ENCODE measurements at regions of chr5 and their contacts with region 1.

Region 1: GRCh38 chr5:157142317-157143126 is at the start of gene MED7:
- DNase-seq: peak; percentile 66 to 98 (median 96)
- ATAC-seq: peak; percentile 98
- H3K4me3 ChIP-seq: peak within 1 kb of the TSS; percentile 82
- H3K4me3 Mint-ChIP-seq: peak within 1 kb of the TSS; percentile 92 to 99 (median 96)
- H3K27ac ChIP-seq: peak within 1 kb of the TSS; percentile 94
- H3K27ac Mint-ChIP-seq: peak within 1 kb of the TSS; percentile 97 to 100 (median 99)
- H3K4me1 ChIP-seq: peaks cover 11 to 22% of the 10 kb centered on the region in 2 donors
- H3K4me1 Mint-ChIP-seq: peaks cover 11 to 64% (median 48%) of the 10 kb centered on the region in 7 donors
- H3K27me3 ChIP-seq: no peaks in the 10 kb centered on the region
- H3K27me3 Mint-ChIP-seq: no peaks in the 10 kb centered on the region
- total RNA-seq, gene MED7: 5.8 to 18.5 (median 14.2) TPM

Region 2: DNA sequence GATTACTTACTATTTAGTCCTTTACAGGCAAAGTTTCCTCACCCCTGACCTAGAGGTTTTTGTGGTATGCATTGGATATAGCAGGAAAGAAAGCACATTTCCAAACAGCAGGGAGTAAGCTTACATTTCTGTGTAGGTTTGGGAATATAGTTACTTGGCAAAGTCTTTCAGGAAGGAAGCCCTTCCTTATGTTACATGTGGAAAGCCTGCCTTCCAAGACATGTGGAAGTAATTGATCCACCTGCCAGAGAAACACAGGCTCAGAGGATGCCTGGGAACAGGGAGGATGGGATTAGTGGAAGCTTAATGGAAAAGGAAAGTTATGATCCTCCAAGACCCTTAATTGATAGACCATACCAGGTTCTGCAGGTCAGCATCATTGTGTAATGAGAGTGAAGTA is 379.8 kb before region 1 on chr5:
- CTCF ChIA-PET with region 1: no interaction called
- POLR2A ChIA-PET with region 1: no interaction called
- intact Hi-C with region 1: no loop called
- DNase-seq: no peak
- ATAC-seq: no peak
- H3K4me3 ChIP-seq: no peak overlapping the region
- H3K4me3 Mint-ChIP-seq: no peak overlapping the region
- H3K27ac ChIP-seq: no peak overlapping the region
- H3K27ac Mint-ChIP-seq: no peak overlapping the region
- H3K4me1 ChIP-seq: no peaks in the 10 kb centered on the region
- H3K4me1 Mint-ChIP-seq: peaks cover 0 to 2% (median 0%) of the 10 kb centered on the region in 7 donors
- H3K27me3 ChIP-seq: peaks cover 0 to 4% of the 10 kb centered on the region in 2 donors
- H3K27me3 Mint-ChIP-seq: peaks cover under 1 to 11% (median 7%) of the 10 kb centered on the region in 5 donors

Region 3: GRCh38 chr5:156913719-156914370 is 228.7 kb before region 1 on chr5:
- CTCF ChIA-PET with region 1: no interaction called
- POLR2A ChIA-PET with region 1: interaction called, 13 read pairs
- intact Hi-C with region 1: no loop called
- DNase-seq: peak in 6 of 9 donors; percentile 32 to 60 (median 54)
- ATAC-seq: peak; percentile 85
- H3K4me3 ChIP-seq: peak overlapping the region; percentile 24
- H3K4me3 Mint-ChIP-seq: peak overlapping the region; percentile 71 to 93 (median 82)
- H3K27ac ChIP-seq: peak overlapping the region; percentile 65
- H3K27ac Mint-ChIP-seq: peak overlapping the region; percentile 91 to 100 (median 97)
- H3K4me1 ChIP-seq: peaks cover 24 to 28% of the 10 kb centered on the region in 2 donors
- H3K4me1 Mint-ChIP-seq: peaks cover 35 to 81% (median 68%) of the 10 kb centered on the region in 7 donors
- H3K27me3 ChIP-seq: no peaks in the 10 kb centered on the region
- H3K27me3 Mint-ChIP-seq: no peaks in the 10 kb centered on the region

Region 4: GRCh38 chr5:157076558-157076957 is 66.0 kb before region 1 on chr5:
- CTCF ChIA-PET with region 1: no interaction called
- POLR2A ChIA-PET with region 1: no interaction called
- intact Hi-C with region 1: no loop called
- DNase-seq: no peak
- ATAC-seq: no peak
- H3K4me3 ChIP-seq: no peak overlapping the region
- H3K4me3 Mint-ChIP-seq: peak overlapping the region in 1 of 10 donors; percentile 23
- H3K27ac ChIP-seq: no peak overlapping the region
- H3K27ac Mint-ChIP-seq: peak overlapping the region in 1 of 9 donors; percentile 54
- H3K4me1 ChIP-seq: no peaks in the 10 kb centered on the region
- H3K4me1 Mint-ChIP-seq: peaks cover 0 to 48% (median 0%) of the 10 kb centered on the region in 7 donors
- H3K27me3 ChIP-seq: no peaks in the 10 kb centered on the region
- H3K27me3 Mint-ChIP-seq: no peaks in the 10 kb centered on the region

Region 5: DNA sequence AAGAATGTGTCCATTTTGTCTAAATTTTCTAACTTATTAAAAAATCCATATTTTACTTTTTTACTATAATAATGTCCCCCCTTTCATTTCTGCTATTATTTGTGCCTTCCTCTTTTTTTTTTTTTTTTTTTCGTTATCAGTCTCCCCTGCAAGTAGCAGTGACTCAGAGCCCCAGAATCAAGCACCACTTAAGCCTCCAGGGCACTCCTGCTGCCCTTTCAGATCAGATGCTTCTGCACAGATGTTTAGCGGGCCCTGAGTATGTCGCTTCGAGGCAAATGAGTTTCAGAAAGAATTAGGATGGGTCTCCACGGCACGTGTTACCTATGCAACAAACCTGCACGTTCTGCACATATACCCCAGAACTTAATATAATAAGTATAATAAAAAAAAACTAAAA is 11.6 kb before region 1 on chr5:
- CTCF ChIA-PET with region 1: interaction called, 12 read pairs
- POLR2A ChIA-PET with region 1: interaction called, 18 read pairs
- intact Hi-C with region 1: no loop called
- DNase-seq: no peak
- ATAC-seq: no peak
- H3K4me3 ChIP-seq: no peak overlapping the region
- H3K4me3 Mint-ChIP-seq: no peak overlapping the region
- H3K27ac ChIP-seq: no peak overlapping the region
- H3K27ac Mint-ChIP-seq: no peak overlapping the region
- H3K4me1 ChIP-seq: no peaks in the 10 kb centered on the region
- H3K4me1 Mint-ChIP-seq: peaks cover 6 to 46% (median 26%) of the 10 kb centered on the region in 7 donors
- H3K27me3 ChIP-seq: no peaks in the 10 kb centered on the region
- H3K27me3 Mint-ChIP-seq: no peaks in the 10 kb centered on the region

Region 6: DNA sequence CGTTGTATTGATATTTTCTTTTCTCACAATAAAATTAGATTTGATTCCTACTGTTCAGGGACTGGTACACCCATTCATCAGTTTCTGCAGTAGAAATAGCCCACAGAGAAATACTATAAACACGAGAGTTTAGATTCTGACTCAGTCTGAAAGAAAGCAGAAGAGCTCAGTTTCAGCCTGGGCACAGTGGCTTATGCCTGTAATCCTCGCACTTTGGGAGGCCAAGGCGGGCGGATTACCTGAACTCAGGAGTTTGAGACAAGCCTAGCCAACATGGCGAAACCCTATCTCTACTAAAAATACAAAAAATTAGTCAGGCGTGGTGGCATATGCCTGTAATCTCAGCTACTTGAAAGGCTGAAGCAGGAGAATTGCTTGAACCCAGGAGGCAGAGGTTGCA is 46.7 kb after region 1 on chr5:
- CTCF ChIA-PET with region 1: interaction called, 17 read pairs
- POLR2A ChIA-PET with region 1: interaction called, 62 read pairs
- intact Hi-C with region 1: no loop called
- DNase-seq: no peak
- ATAC-seq: no peak
- H3K4me3 ChIP-seq: peak overlapping the region; percentile 68
- H3K4me3 Mint-ChIP-seq: peak overlapping the region; percentile 83 to 100 (median 96)
- H3K27ac ChIP-seq: peak overlapping the region; percentile 81
- H3K27ac Mint-ChIP-seq: peak overlapping the region; percentile 63 to 98 (median 91)
- H3K4me1 ChIP-seq: peaks cover 75 to 81% of the 10 kb centered on the region in 2 donors
- H3K4me1 Mint-ChIP-seq: peaks cover 56 to 94% (median 83%) of the 10 kb centered on the region in 7 donors
- H3K27me3 ChIP-seq: no peaks in the 10 kb centered on the region
- H3K27me3 Mint-ChIP-seq: no peaks in the 10 kb centered on the region

Region 7: DNA sequence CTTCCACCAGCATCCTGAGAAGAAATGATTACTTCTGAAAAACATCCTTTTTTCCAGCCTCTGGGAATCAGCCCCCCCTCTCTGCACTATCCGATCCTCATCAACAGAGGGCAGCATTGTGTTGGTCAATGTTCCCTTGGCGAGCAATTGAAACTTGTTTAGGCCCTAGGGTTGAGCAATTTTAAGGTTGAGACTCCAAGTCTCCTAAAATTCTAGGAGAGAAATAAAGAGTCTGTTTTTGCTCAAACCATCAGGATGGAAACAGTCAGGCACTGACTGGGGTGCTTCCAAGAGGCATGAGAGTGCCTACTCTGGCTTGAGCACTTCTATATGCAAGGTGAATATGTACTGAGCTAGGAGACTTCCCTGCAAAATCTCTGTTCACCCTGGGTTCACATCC is 111.0 kb after region 1 on chr5:
- CTCF ChIA-PET with region 1: interaction called, 18 read pairs
- POLR2A ChIA-PET with region 1: interaction called, 24 read pairs
- intact Hi-C with region 1: loop called in 1 of 2 experiments (anchors 1 kb)
- DNase-seq: no peak
- ATAC-seq: peak; percentile 44
- H3K4me3 ChIP-seq: peak overlapping the region; percentile 31
- H3K4me3 Mint-ChIP-seq: peak overlapping the region; percentile 62 to 79 (median 72)
- H3K27ac ChIP-seq: peak overlapping the region; percentile 66
- H3K27ac Mint-ChIP-seq: peak overlapping the region; percentile 86 to 98 (median 96)
- H3K4me1 ChIP-seq: peaks cover 93 to 97% of the 10 kb centered on the region in 2 donors
- H3K4me1 Mint-ChIP-seq: peaks cover 64 to 99% (median 94%) of the 10 kb centered on the region in 7 donors
- H3K27me3 ChIP-seq: no peaks in the 10 kb centered on the region
- H3K27me3 Mint-ChIP-seq: no peaks in the 10 kb centered on the region

Region 8: DNA sequence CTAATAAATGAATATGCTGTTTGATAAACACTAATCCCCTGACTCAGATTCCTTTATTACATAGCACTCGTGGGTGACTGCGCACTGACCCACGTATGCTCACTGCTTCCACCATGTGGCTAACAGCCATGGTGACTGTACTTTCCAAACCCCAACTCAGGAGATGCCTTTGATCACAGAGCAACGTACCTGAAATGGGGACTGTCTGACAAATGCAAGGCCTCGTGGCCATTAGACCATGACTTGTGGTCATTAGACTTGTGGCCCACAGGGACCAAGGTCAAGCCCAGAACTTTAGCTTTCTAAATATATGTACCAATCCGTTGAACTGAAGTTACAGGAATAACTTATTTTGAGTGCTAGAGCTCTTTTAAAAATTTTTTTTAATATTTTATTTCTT is 170.0 kb after region 1 on chr5:
- CTCF ChIA-PET with region 1: interaction called, 9 read pairs
- POLR2A ChIA-PET with region 1: interaction called, 19 read pairs
- intact Hi-C with region 1: loop called in 1 of 2 experiments (anchors 1 kb)
- DNase-seq: peak in 8 of 9 donors; percentile 51 to 71 (median 65)
- ATAC-seq: peak; percentile 96
- H3K4me3 ChIP-seq: no peak overlapping the region
- H3K4me3 Mint-ChIP-seq: peak overlapping the region in 2 of 10 donors; percentile 35
- H3K27ac ChIP-seq: peak overlapping the region; percentile 39
- H3K27ac Mint-ChIP-seq: peak overlapping the region; percentile 50 to 94 (median 86)
- H3K4me1 ChIP-seq: peaks cover 22 to 36% of the 10 kb centered on the region in 2 donors
- H3K4me1 Mint-ChIP-seq: peaks cover 18 to 59% (median 42%) of the 10 kb centered on the region in 7 donors
- H3K27me3 ChIP-seq: no peaks in the 10 kb centered on the region
- H3K27me3 Mint-ChIP-seq: no peaks in the 10 kb centered on the region

Region 9: GRCh38 chr5:157743163-157744050 is 600.9 kb after region 1 on chr5 and contains the start of gene LSM11:
- CTCF ChIA-PET with region 1: interaction called, 3 read pairs
- POLR2A ChIA-PET with region 1: no interaction called
- intact Hi-C with region 1: loop called in 1 of 2 experiments (anchors 1 kb)
- DNase-seq: peak; percentile 81 to 97 (median 89)
- ATAC-seq: peak; percentile 100
- H3K4me3 ChIP-seq: peak within 1 kb of the TSS; percentile 66
- H3K4me3 Mint-ChIP-seq: peak within 1 kb of the TSS; percentile 85 to 97 (median 93)
- H3K27ac ChIP-seq: peak within 1 kb of the TSS; percentile 74
- H3K27ac Mint-ChIP-seq: peak within 1 kb of the TSS; percentile 65 to 91 (median 82)
- H3K4me1 ChIP-seq: peaks cover 13% of the 10 kb centered on the region in 2 donors
- H3K4me1 Mint-ChIP-seq: peaks cover 7 to 42% (median 23%) of the 10 kb centered on the region in 7 donors
- H3K27me3 ChIP-seq: no peaks in the 10 kb centered on the region
- H3K27me3 Mint-ChIP-seq: no peaks in the 10 kb centered on the region
- total RNA-seq, gene LSM11: 1.6 to 5.0 (median 4.0) TPM

Measured in naive thymus-derived CD4-positive, alpha-beta T cell (primary cell).